ENCODE measurements at regions of chr3 and their contacts with region 1.

Region 1: GRCh38 chr3:120742198-120742849 is at the starts of genes GTF2E1 and RABL3:
- DNase-seq: peak; percentile 97 to 98
- ATAC-seq: peak; percentile 100
- H3K4me3 ChIP-seq: peak within 1 kb of the TSS; percentile 57 to 91
- H3K27ac ChIP-seq: peak within 1 kb of the TSS in 1 of 2 donors; percentile 80
- H3K4me1 ChIP-seq: peaks cover 0 to 9% of the 10 kb centered on the region in 2 donors
- H3K27me3 ChIP-seq: no peaks in the 10 kb centered on the region
- total RNA-seq, gene GTF2E1: 11.9 to 15.8 TPM
- total RNA-seq, gene RABL3: 16.6 to 20.4 TPM

Region 2: DNA sequence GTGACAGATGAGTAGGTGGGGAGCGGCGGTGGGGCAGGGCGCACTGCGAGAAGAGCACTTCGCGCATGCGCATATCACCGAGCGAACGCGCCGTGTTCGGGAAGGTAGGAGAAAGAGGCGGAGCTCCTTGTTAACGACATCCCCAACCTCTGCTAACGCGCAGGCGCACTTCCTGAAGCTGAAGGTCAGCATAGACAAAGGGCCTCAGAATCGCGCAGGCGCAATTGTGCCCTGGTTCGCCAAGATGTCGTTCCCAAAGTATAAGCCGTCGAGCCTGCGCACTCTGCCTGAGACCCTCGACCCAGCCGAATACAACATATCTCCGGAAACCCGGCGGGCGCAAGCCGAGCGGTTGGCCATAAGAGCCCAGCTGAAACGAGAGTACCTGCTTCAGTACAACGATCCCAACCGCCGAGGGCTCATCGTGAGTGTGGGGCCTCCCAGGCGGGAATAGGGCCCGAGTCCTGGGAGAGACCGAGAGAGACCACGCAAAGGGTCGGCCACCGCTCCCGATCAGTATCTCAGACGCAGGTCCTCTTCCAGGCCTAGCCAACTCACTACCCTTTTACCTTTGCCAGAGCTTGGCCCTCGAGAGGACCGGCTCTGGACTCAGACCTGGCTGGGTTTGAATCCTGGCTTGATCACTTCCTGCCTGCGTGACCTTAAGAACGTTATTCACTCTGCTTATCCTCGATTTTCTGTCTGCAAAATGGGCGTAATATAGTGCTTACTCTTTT is 146.0 kb before region 1 on chr3 and contains the start of gene NDUFB4:
- intact Hi-C with region 1: loop called in 1 of 2 experiments (anchors 5 kb)
- DNase-seq: peak; percentile 99
- ATAC-seq: peak; percentile 100
- H3K4me3 ChIP-seq: peak within 1 kb of the TSS; percentile 59 to 90
- H3K27ac ChIP-seq: peak within 1 kb of the TSS in 1 of 2 donors; percentile 66
- H3K4me1 ChIP-seq: peaks cover 4 to 9% of the 10 kb centered on the region in 2 donors
- H3K27me3 ChIP-seq: no peaks in the 10 kb centered on the region
- total RNA-seq, gene NDUFB4: 84.4 to 91.1 TPM

Region 3: GRCh38 chr3:120678331-120678947 is 63.9 kb before region 1 on chr3:
- intact Hi-C with region 1: no loop called
- DNase-seq: peak in 1 of 2 donors; percentile 48
- ATAC-seq: peak; percentile 72
- H3K4me3 ChIP-seq: peak overlapping the region in 1 of 2 donors; percentile 54
- H3K27ac ChIP-seq: peak overlapping the region in 1 of 2 donors; percentile 63
- H3K4me1 ChIP-seq: peaks cover 0 to 6% of the 10 kb centered on the region in 2 donors
- H3K27me3 ChIP-seq: no peaks in the 10 kb centered on the region

Region 4: GRCh38 chr3:120763601-120764000 is 21.3 kb after region 1 on chr3:
- intact Hi-C with region 1: no loop called
- DNase-seq: no peak
- ATAC-seq: no peak
- H3K4me3 ChIP-seq: no peak overlapping the region
- H3K27ac ChIP-seq: no peak overlapping the region
- H3K4me1 ChIP-seq: peaks cover 0 to 3% of the 10 kb centered on the region in 2 donors
- H3K27me3 ChIP-seq: no peaks in the 10 kb centered on the region

Region 5: DNA sequence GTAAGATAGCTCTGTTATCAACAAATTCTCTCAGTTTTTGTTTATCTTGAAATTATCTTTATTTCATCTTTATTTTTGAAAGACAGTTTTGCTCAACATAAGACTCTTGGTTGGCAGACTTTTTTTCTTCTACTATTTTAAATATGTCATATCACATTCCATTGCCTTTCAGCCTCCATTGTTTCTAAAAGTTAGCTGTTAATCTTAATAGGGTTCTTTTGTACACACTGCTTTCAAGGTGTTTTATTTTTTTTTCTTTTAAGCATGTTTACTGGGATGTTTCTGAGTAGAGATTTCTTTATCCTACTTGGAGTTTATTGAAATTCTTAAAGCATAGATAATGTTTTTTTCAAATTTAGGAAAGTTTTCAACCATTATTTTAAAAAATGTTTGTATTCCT is 460.2 kb after region 1 on chr3:
- intact Hi-C with region 1: no loop called
- DNase-seq: no peak
- ATAC-seq: no peak
- H3K4me3 ChIP-seq: no peak overlapping the region
- H3K27ac ChIP-seq: no peak overlapping the region
- H3K4me1 ChIP-seq: no peaks in the 10 kb centered on the region
- H3K27me3 ChIP-seq: no peaks in the 10 kb centered on the region